ENCODE measurements at regions of chrX and their contacts with region 1.

Region 1: GRCh38 chrX:71514367-71515038 is 18.4 kb upstream of the OGT start:
- DNase-seq: no peak
- H3K4me3 Mint-ChIP-seq: peak overlapping the region; percentile 20
- H3K27ac Mint-ChIP-seq: peak overlapping the region; percentile 68
- H3K4me1 Mint-ChIP-seq: peaks cover 18% of the 10 kb centered on the region
- H3K27me3 Mint-ChIP-seq: peaks cover 2% of the 10 kb centered on the region

Region 2: GRCh38 chrX:71492231-71493065 is 22.1 kb before region 1 on chrX:
- intact Hi-C with region 1: loop called (anchors 2 kb)
- DNase-seq: peak; percentile 31
- H3K4me3 Mint-ChIP-seq: peak overlapping the region; percentile 86
- H3K27ac Mint-ChIP-seq: peak overlapping the region; percentile 79
- H3K4me1 Mint-ChIP-seq: peaks cover 14% of the 10 kb centered on the region
- H3K27me3 Mint-ChIP-seq: no peaks in the 10 kb centered on the region

Region 3: DNA sequence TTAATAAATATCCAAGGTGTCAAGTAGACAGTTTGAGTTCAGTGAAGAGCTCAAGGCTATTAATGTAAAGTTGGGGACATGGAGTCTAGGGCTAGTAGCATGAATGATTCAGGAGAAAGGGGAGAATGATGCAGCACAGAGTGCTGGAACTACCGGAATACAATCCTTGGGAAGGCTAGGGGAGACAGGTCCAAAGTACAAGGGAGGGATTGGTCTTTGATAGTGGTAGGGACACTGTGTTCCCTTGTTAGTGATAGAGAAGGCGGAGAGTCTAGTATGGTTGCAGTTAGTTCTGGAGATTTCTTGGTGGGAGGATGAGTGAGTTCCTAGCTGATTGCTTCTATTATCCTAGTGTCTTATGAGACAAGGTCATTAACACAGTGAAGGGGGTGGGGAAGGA is 72.4 kb after region 1 on chrX:
- intact Hi-C with region 1: loop called (anchors 2 kb)
- DNase-seq: no peak
- H3K4me3 Mint-ChIP-seq: no peak overlapping the region
- H3K27ac Mint-ChIP-seq: peak overlapping the region; percentile 80
- H3K4me1 Mint-ChIP-seq: no peaks in the 10 kb centered on the region
- H3K27me3 Mint-ChIP-seq: no peaks in the 10 kb centered on the region

Measured in activated T-helper 1 cell treated with anti-CD3 and anti-CD28 coated beads, Interleukin-12 subunit alpha, Interleukin-12 subunit beta, Interleukin-2, Interleukin-4 antibody, amounts not matched to agents 30 ng/mL and 10 ng/mL and 1 ng/mL, durations not matched to agents 14 hours and 24 hours and 36 hours (primary cell).